Lower leg skin (tissue), 4 donors: ENCODE measurements at regions of chr1 and their contacts with region 1.

Region 1: GRCh38 chr1:87953732-87954344 is 625.2 kb downstream of the LMO4 start:
- DNase-seq: peak in 1 of 2 donors; percentile 53
- H3K4me3 ChIP-seq: no peak overlapping the region
- CTCF ChIP-seq: peak in 1 of 3 donors; percentile 32
- POLR2A ChIP-seq: no peak

Region 2: DNA sequence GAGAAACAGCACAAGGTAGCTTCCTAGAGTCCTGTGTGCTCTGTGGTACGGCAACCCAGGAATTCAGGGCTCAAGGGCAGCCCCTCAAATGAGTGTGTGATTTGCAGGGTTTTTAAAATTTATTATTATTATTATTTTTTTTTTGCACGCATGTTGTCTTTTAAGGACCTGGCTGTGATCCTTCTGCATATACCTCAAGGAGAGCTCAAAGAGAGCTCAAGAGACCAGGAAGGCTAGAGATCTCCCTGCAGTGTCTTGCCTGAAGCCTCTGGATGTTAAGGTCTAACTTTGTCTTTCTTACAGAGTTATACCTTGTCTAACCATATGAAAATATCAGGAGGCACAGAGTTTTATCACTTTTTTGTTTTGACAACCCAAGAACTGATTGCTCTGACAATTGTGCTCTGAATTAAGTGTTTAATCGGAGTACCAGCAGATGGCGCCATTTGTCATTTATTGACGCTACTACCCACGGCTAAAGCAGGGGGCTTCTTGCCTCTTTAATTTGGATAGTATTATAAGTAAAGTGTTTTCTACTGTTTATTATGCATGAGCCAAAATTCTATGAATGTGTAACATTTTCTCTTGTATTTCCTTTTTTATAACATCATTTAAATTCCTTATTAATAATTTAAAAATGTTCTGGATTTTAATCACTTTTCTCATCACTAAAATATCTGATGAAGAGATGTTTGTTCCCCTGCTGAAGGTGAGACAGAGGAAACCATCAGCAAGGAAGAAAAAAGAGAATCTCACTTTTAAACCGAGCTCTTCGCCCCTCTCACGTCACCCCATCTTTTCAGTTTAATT is 660.9 kb before region 1 on chr1:
- intact Hi-C with region 1: loop called (anchors 10 kb)
- DNase-seq: peak in 1 of 2 donors; percentile 57
- H3K4me3 ChIP-seq: no peak overlapping the region
- CTCF ChIP-seq: no peak
- POLR2A ChIP-seq: no peak

Region 3: DNA sequence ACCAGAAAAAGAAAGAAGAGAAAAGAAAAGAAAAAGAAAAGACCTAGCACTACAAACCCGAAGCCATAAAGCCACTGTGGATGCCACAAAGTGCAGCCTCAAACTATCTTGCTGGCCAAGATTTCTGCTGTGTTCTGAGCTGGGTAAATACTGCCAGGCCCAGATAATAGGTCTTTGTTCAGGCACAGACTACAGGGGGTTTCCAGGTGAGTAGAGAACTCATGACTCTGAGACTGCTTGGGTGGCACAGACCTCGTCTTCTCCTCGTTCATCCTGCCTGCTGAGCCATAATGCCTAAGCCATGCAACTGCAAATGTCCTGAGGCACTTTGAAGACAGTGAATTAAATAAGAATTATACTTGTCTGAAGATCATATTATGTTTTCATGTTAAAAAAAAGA is 26.7 kb after region 1 on chr1:
- intact Hi-C with region 1: no loop called
- DNase-seq: no peak
- H3K4me3 ChIP-seq: no peak overlapping the region
- CTCF ChIP-seq: no peak
- POLR2A ChIP-seq: no peak